Activated CD4-positive, alpha-beta memory T cell treated with anti-CD3 and anti-CD28 coated beads, Interleukin-2, amount 10 ng/mL, durations not matched to agents 7 days and 5 days (primary cell): ENCODE measurements at regions of chr2 and their contacts with region 1.

Region 1: DNA sequence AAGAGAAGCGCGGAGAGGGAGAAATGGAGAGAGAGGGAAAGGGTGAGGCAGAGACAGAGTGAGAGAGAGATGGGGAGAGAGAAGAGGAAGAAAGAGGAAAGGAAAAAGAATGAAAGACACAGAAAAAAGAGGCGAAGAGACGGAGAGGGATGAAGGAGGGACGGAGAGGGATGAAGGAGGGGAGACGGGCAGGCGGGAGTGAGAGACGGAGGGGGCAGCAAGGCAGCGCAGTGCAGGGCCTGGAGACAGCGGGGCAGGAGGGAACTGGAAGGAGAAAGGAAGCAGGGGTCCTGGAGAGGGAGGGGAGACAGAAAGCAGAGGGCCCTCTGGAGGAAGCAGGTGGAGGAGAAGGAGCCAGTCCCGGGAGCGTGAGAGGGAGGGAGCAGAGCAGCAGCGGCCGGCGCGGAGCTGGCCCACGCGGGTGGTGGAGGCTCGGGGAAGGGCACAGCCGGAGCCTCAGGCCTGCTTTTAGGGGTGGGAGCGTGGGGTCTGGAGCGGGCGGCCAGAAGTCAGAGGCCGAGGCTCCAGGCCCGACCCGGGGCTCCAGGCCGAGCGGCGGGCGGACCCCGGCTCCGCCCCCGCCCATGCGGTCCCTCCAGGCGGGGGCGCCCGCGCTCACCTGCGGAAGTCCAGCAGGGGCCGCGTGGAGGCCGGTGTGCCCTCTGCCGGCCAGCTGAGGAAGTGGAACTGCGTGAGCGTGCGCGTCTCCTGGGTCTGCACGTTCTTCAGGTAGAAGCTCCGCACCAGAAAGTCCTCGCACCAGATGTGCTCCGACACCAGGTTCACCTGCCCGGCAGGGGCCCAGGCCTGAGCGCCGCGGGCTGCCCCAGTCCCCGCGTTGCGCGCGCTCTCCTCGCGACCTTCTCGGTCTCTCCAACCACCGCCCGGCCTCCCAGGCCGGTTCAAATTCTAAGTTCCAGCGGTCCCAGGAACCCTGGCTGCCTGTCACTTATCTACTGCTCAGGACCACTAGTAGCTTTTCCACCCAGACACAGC is 14.5 kb downstream of the PTPRN start:
- DNase-seq: peak; percentile 90
- H3K4me3 Mint-ChIP-seq: peak overlapping the region; percentile 66
- H3K27ac Mint-ChIP-seq: no peak overlapping the region
- H3K4me1 Mint-ChIP-seq: peaks cover 22% of the 10 kb centered on the region
- H3K27me3 Mint-ChIP-seq: peaks cover 14% of the 10 kb centered on the region

Region 2: GRCh38 chr2:219160186-219161017 is 134.3 kb before region 1 on chr2 and contains the start of gene NHEJ1:
- CTCF ChIA-PET with region 1: interaction called, 122 read pairs
- POLR2A ChIA-PET with region 1: interaction called, 5 read pairs
- DNase-seq: peak; percentile 94
- H3K4me3 Mint-ChIP-seq: peak within 1 kb of the TSS; percentile 88
- H3K27ac Mint-ChIP-seq: peak within 1 kb of the TSS; percentile 86
- H3K4me1 Mint-ChIP-seq: peaks cover 20% of the 10 kb centered on the region
- H3K27me3 Mint-ChIP-seq: no peaks in the 10 kb centered on the region
- total RNA-seq, gene NHEJ1: 12.0 to 12.2 TPM

Region 3: GRCh38 chr2:219206442-219207253 is 88.0 kb before region 1 on chr2 and contains the start of gene ZFAND2B:
- CTCF ChIA-PET with region 1: interaction called, 18 read pairs
- POLR2A ChIA-PET with region 1: interaction called, 7 read pairs
- DNase-seq: peak; percentile 96
- H3K4me3 Mint-ChIP-seq: peak within 1 kb of the TSS; percentile 79
- H3K27ac Mint-ChIP-seq: peak within 1 kb of the TSS; percentile 88
- H3K4me1 Mint-ChIP-seq: peaks cover 52% of the 10 kb centered on the region
- H3K27me3 Mint-ChIP-seq: no peaks in the 10 kb centered on the region
- total RNA-seq, gene ZFAND2B: 51.4 to 56.7 TPM

Region 4: DNA sequence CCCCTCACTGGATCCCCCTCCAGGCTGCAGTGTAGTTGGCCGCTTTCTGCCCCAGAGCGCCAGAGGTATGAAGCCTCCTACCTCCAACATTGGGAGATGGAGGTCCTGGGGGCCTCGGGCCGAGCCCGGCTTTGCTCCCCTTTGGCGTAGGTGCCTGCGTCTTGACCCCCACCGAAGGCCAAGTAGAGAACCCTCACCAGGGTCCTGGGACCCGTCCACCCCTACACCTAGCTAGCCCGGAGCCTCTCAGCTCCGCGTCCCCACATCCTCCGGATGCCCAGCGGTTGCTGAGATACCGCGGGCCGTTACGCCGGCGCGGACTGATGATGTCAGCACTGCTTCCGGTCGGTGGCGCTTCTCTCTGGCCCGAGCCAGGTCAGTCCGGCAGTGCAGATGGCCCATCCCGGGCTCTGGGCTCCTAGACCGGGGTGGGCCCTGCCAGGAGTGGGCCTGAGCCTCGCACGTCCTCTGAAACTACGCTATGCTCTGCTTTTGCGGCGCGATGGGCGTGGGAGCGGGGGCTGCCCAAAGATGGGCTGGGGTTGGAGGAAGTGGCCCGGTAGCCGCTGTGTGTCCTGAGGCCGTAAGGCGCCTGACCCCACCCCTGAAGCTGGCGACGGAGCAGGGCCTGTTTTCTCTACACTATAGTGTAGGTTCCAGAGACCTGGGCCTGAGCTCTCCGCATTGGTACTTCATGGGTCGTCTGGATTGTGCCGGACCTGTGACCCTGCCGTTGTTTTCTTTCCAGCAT is 49.3 kb before region 1 on chr2 and contains the starts of genes GLB1L and STK16:
- CTCF ChIA-PET with region 1: interaction called, 120 read pairs
- POLR2A ChIA-PET with region 1: interaction called, 12 read pairs
- DNase-seq: peak; percentile 92
- H3K4me3 Mint-ChIP-seq: peak within 1 kb of the TSS; percentile 100
- H3K27ac Mint-ChIP-seq: peak within 1 kb of the TSS; percentile 81
- H3K4me1 Mint-ChIP-seq: peaks cover 66% of the 10 kb centered on the region
- H3K27me3 Mint-ChIP-seq: no peaks in the 10 kb centered on the region
- total RNA-seq, gene GLB1L: 6.2 to 7.3 TPM
- total RNA-seq, gene STK16: 41.6 to 42.3 TPM

Region 5: GRCh38 chr2:219269362-219270054 is 25.1 kb before region 1 on chr2:
- CTCF ChIA-PET with region 1: interaction called, 206 read pairs
- POLR2A ChIA-PET with region 1: no interaction called
- DNase-seq: no peak
- H3K4me3 Mint-ChIP-seq: no peak overlapping the region
- H3K27ac Mint-ChIP-seq: no peak overlapping the region
- H3K4me1 Mint-ChIP-seq: no peaks in the 10 kb centered on the region
- H3K27me3 Mint-ChIP-seq: peaks cover 12% of the 10 kb centered on the region

Region 6: DNA sequence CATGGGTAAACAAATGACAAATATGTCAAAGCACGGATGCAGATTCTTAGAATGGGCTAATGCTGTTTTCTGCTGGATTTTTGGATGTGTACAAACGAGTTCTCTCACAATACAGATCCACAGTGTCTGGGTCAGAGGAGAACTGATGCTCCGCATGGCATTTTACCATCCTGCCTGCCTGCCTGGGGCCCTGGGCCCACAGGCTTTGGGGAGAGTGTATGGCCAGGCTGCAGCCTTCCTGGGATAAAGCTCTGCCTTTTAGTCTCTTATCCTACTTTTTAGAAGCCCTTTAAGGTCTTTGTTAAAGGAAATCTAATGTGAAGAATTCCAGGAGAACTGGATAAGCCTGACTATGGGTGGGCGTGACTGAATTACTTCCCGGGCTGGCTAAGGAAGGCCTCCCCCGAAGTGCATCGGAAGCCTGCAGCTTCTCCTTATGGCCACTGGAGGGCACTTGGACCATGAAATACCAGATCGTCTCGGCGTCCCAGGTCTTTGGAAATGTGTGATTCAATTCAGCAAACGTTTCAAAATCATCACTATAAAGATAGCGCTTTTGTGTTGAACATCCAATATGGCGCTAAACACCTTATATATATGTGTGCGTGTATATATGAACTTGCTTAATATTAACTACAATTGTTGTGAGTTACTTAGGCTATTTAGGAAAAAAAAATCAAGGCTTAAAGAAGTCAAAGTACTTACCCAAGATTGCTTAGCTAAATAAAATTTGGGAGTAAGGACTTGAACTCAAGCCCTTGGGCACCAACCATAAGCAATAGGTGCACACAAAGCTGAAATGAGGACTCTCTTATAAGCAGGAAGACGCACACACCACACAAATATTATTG is 108.2 kb after region 1 on chr2:
- CTCF ChIA-PET with region 1: no interaction called
- POLR2A ChIA-PET with region 1: no interaction called
- DNase-seq: peak; percentile 58
- H3K4me3 Mint-ChIP-seq: no peak overlapping the region
- H3K27ac Mint-ChIP-seq: no peak overlapping the region
- H3K4me1 Mint-ChIP-seq: no peaks in the 10 kb centered on the region
- H3K27me3 Mint-ChIP-seq: peaks cover 10% of the 10 kb centered on the region